CD4-positive, alpha-beta T cell (primary cell): ENCODE measurements at regions of chr2 and their contacts with region 1.

Region 1: GRCh38 chr2:231557571-231558237 is 27.5 kb upstream of the NMUR1 start:
- DNase-seq: peak; percentile 25 to 90 (median 51)
- ATAC-seq: peak; percentile 97
- H3K4me3 ChIP-seq: no peak overlapping the region
- H3K4me3 Mint-ChIP-seq: no peak overlapping the region
- H3K27ac ChIP-seq: no peak overlapping the region
- H3K27ac Mint-ChIP-seq: no peak overlapping the region
- H3K4me1 ChIP-seq: peaks cover 23% of the 10 kb centered on the region
- H3K4me1 Mint-ChIP-seq: no peaks in the 10 kb centered on the region
- H3K27me3 ChIP-seq: no peaks in the 10 kb centered on the region
- H3K27me3 Mint-ChIP-seq: no peaks in the 10 kb centered on the region
- CTCF ChIP-seq: peak; percentile 75

Region 2: DNA sequence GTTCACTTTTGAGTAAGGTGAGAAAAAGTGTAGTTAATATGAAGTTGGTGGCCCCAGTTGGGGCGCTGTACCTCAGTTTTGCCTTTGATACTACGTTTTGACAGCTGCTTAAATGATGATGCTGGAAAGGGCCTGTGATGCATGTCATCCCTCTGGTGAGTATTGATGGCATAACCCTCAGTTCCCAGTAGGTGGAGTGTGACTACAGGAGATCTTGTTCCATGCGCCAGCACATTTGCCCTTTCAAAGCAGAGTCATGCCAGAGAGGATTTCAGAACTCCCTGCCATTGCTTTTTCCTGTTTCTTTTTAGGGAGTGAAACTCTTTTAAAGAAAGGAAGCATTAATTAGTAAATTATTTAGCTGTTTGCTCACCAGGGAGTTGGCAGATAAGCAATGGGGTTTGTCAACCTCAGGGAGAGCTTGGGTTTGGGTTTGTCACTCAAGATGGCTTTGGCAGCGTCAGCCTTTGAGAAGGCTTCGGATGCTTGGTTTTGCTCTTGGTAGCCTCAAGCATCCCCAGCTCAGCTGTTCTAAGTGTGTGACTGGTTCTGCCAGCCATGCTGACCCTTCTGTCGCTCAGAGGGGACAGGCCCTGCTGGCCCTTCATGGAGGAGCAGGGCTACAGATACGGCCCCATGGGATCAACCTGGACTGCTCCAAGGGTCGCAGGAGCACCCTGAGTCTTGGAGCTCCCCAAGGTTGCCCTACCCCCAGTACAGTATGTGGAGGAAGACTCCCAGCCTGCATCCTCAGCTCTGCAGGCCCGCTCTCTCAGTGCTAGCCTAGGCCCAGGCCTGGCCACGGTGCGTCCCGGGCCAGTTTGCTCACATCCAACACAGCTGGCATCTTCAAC is 330.2 kb before region 1 on chr2:
- CTCF ChIA-PET with region 1: no interaction called
- POLR2A ChIA-PET with region 1: no interaction called
- intact Hi-C with region 1: loop called (anchors 2 to 5 kb)
- DNase-seq: peak in 11 of 14 experiments; percentile 2 to 74 (median 16)
- ATAC-seq: peak; percentile 97
- H3K4me3 ChIP-seq: no peak overlapping the region
- H3K4me3 Mint-ChIP-seq: no peak overlapping the region
- H3K27ac ChIP-seq: no peak overlapping the region
- H3K27ac Mint-ChIP-seq: no peak overlapping the region
- H3K4me1 ChIP-seq: no peaks in the 10 kb centered on the region
- H3K4me1 Mint-ChIP-seq: no peaks in the 10 kb centered on the region
- H3K27me3 ChIP-seq: no peaks in the 10 kb centered on the region
- H3K27me3 Mint-ChIP-seq: no peaks in the 10 kb centered on the region
- CTCF ChIP-seq: peak; percentile 48

Region 3: GRCh38 chr2:231482806-231483391 is 74.8 kb before region 1 on chr2:
- CTCF ChIA-PET with region 1: interaction called, 13 read pairs
- POLR2A ChIA-PET with region 1: interaction called, 5 read pairs
- intact Hi-C with region 1: loop called (anchors 1 kb)
- DNase-seq: peak; percentile 46 to 85 (median 65)
- ATAC-seq: peak; percentile 77
- H3K4me3 ChIP-seq: peak overlapping the region; percentile 78
- H3K4me3 Mint-ChIP-seq: peak overlapping the region; percentile 78
- H3K27ac ChIP-seq: peak overlapping the region; percentile 70 to 88
- H3K27ac Mint-ChIP-seq: peak overlapping the region; percentile 87
- H3K4me1 ChIP-seq: peaks cover 21% of the 10 kb centered on the region
- H3K4me1 Mint-ChIP-seq: peaks cover 11% of the 10 kb centered on the region
- H3K27me3 ChIP-seq: no peaks in the 10 kb centered on the region
- H3K27me3 Mint-ChIP-seq: no peaks in the 10 kb centered on the region
- CTCF ChIP-seq: peak; percentile 91

Region 4: DNA sequence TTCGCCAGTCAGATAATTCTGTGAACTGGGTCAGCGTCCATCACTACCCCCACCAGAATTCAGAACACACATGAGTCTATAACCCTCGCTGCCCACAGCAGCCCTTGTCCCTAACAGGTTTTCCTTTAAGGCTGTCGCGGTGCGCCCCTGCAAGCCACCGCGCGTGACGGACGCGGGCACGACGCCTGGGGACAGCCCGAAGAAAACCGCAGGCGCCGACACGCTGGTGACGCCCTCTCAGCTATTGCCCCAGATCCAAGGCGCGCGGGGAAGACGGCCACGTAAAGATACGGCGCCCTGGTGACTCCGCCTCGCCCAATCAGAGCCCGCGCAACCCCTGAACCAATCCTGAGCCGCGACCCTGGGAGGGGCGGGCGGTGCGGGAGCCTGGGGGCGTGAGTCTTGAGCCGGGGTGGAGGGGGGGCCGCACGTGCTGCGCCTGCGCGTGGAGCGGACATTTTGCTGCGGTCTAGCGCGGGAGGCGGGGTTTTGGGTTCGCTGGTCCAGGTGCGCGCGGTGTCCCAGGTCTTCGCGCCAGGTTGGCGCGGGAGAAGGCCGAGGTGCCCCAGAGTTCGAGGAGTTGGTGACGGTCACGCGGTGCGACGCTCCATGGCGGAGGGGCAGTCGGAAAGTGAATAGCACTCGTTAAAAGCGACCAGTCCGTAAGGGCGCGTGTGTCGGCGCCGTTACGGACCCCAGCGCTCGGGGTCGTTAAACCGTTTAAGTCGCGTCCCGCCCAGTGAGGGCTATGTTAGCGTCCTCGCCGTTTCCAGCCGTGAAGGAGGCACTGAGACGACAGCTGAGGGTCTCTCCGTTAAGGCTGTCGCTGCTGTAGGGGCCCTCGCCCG is 43.4 kb before region 1 on chr2:
- CTCF ChIA-PET with region 1: interaction called, 7 read pairs
- POLR2A ChIA-PET with region 1: interaction called, 5 read pairs
- intact Hi-C with region 1: loop called (anchors 2 kb)
- DNase-seq: peak; percentile 96 to 99 (median 98)
- ATAC-seq: peak; percentile 96
- H3K4me3 ChIP-seq: peak overlapping the region; percentile 78
- H3K4me3 Mint-ChIP-seq: peak overlapping the region; percentile 91
- H3K27ac ChIP-seq: peak overlapping the region; percentile 87 to 95
- H3K27ac Mint-ChIP-seq: peak overlapping the region; percentile 94
- H3K4me1 ChIP-seq: peaks cover 12% of the 10 kb centered on the region
- H3K4me1 Mint-ChIP-seq: peaks cover 24% of the 10 kb centered on the region
- H3K27me3 ChIP-seq: no peaks in the 10 kb centered on the region
- H3K27me3 Mint-ChIP-seq: no peaks in the 10 kb centered on the region
- CTCF ChIP-seq: no peak

Region 5: DNA sequence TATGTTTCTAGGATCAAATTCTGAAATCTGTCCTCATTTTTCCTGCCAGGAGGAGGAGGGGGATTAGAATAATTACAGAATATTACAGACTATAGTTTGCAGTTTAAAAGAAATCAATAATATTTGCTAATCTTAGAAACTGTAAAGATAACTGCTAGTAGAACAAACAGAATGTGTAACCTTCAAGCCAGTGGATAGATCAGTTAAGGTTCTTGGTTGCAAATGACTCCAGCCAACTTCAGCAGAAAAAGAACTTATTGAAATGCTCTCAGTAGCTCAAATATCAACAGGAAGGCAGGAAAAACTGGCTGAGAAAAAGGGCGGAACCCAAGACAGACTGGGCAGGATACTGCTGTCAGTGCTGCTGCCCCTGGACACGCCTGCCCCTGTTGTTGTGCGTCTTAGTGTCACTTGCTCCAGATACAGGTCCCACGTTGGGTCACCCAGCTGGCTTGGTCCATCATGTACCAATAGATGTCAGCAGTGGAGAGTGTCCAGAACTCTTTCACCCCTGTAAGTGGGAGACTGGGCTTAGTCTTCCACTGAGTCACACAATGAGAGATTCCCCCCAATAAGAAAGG is 37.6 kb before region 1 on chr2:
- CTCF ChIA-PET with region 1: interaction called, 7 read pairs
- POLR2A ChIA-PET with region 1: interaction called, 5 read pairs
- intact Hi-C with region 1: loop called (anchors 2 kb)
- DNase-seq: no peak
- ATAC-seq: no peak
- H3K4me3 ChIP-seq: no peak overlapping the region
- H3K4me3 Mint-ChIP-seq: no peak overlapping the region
- H3K27ac ChIP-seq: no peak overlapping the region
- H3K27ac Mint-ChIP-seq: no peak overlapping the region
- H3K4me1 ChIP-seq: peaks cover 23% of the 10 kb centered on the region
- H3K4me1 Mint-ChIP-seq: peaks cover 10% of the 10 kb centered on the region
- H3K27me3 ChIP-seq: no peaks in the 10 kb centered on the region
- H3K27me3 Mint-ChIP-seq: no peaks in the 10 kb centered on the region
- CTCF ChIP-seq: no peak

Region 6: GRCh38 chr2:231530091-231531011 is 27.4 kb before region 1 on chr2 and contains the start of gene NMUR1:
- CTCF ChIA-PET with region 1: interaction called, 3 read pairs
- POLR2A ChIA-PET with region 1: no interaction called
- intact Hi-C with region 1: loop called (anchors 1 kb)
- DNase-seq: peak; percentile 39 to 89 (median 64)
- ATAC-seq: peak; percentile 95
- H3K4me3 ChIP-seq: peak within 1 kb of the TSS; percentile 21
- H3K4me3 Mint-ChIP-seq: peak within 1 kb of the TSS; percentile 0
- H3K27ac ChIP-seq: no peak within 1 kb of the TSS
- H3K27ac Mint-ChIP-seq: no peak within 1 kb of the TSS
- H3K4me1 ChIP-seq: peaks cover 41% of the 10 kb centered on the region
- H3K4me1 Mint-ChIP-seq: peaks cover 5% of the 10 kb centered on the region
- H3K27me3 ChIP-seq: peaks cover 7 to 10% of the 10 kb centered on the region in 2 experiments
- H3K27me3 Mint-ChIP-seq: peaks cover 24% of the 10 kb centered on the region
- CTCF ChIP-seq: peak; percentile 77
- total RNA-seq, gene NMUR1: 0.11 to 0.14 TPM